ENCODE measurements at regions of chr20 and their contacts with region 1.

Region 1: DNA sequence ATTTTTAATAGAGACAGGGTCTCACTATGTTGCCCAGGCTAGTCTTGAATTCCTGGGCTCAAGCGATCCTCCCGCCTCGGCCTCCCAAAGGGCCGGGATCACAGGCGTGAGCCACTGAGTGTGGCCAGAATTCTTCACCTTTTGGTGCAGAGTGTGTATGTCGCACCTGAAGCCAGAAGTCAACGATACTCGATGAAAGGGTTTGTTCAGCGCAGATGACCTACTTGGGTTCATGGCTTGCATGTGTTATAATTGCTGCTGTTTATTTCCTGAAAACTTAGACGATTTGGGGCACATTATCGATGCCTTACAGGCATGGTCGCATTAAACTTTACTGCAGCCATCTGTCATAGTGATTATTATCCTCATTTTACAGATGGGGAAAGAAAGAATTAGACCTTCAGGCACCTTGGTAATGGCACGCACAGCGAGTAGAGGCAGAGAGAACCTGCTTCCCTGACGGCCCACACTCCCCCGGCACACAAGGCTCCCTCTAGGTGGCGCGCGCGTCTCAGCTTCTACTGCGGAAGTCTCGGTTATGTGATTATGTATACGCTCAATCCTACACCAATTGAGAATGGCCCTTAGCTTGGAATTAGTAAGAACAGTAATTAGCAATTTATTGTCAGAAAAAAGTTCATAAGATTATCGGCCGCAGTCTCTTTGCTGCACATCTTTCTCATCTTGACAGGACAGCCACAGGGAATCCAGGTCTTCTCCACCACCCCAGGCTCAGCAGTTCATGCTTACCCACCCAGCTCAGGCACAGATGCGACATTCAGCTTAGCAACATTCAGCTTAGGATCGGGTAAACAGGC is 212.8 kb upstream of the PROKR2 start:
- DNase-seq: peak; percentile 73 to 94 (median 82)
- ATAC-seq: peak; percentile 94 to 97 (median 96)
- H3K4me3 ChIP-seq: no peak overlapping the region
- H3K27ac ChIP-seq: no peak overlapping the region
- H3K4me1 ChIP-seq: peaks cover 0 to 6% (median 0%) of the 10 kb centered on the region in 3 donors
- H3K27me3 ChIP-seq: no peaks in the 10 kb centered on the region
- CTCF ChIP-seq: peak; percentile 47 to 65 (median 60)

Region 2: GRCh38 chr20:5933802-5934436 is 404.4 kb after region 1 on chr20:
- intact Hi-C with region 1: loop called in 1 of 3 experiments (anchors 10 kb)
- DNase-seq: peak in 2 of 6 donors; percentile 6 to 14
- ATAC-seq: peak in 3 of 4 donors; percentile 64 to 66 (median 65)
- H3K4me3 ChIP-seq: no peak overlapping the region
- H3K27ac ChIP-seq: no peak overlapping the region
- H3K4me1 ChIP-seq: no peaks in the 10 kb centered on the region
- H3K27me3 ChIP-seq: no peaks in the 10 kb centered on the region
- CTCF ChIP-seq: no peak

Region 3: GRCh38 chr20:6075428-6076219 is 546.1 kb after region 1 on chr20:
- intact Hi-C with region 1: loop called in 2 of 3 experiments (anchors 5 kb)
- DNase-seq: no peak
- ATAC-seq: peak; percentile 41 to 69 (median 60)
- H3K4me3 ChIP-seq: no peak overlapping the region
- H3K27ac ChIP-seq: peak overlapping the region in 1 of 4 donors; percentile 10
- H3K4me1 ChIP-seq: peaks cover 0 to 8% (median 6%) of the 10 kb centered on the region in 3 donors
- H3K27me3 ChIP-seq: no peaks in the 10 kb centered on the region
- CTCF ChIP-seq: no peak

Measured in pancreas (tissue), 10 donors.